Activated naive CD4-positive, alpha-beta T cell treated with anti-CD3 and anti-CD28 coated beads for 36 hours (primary cell): ENCODE measurements at regions of chr11 and their contacts with region 1.

Region 1: DNA sequence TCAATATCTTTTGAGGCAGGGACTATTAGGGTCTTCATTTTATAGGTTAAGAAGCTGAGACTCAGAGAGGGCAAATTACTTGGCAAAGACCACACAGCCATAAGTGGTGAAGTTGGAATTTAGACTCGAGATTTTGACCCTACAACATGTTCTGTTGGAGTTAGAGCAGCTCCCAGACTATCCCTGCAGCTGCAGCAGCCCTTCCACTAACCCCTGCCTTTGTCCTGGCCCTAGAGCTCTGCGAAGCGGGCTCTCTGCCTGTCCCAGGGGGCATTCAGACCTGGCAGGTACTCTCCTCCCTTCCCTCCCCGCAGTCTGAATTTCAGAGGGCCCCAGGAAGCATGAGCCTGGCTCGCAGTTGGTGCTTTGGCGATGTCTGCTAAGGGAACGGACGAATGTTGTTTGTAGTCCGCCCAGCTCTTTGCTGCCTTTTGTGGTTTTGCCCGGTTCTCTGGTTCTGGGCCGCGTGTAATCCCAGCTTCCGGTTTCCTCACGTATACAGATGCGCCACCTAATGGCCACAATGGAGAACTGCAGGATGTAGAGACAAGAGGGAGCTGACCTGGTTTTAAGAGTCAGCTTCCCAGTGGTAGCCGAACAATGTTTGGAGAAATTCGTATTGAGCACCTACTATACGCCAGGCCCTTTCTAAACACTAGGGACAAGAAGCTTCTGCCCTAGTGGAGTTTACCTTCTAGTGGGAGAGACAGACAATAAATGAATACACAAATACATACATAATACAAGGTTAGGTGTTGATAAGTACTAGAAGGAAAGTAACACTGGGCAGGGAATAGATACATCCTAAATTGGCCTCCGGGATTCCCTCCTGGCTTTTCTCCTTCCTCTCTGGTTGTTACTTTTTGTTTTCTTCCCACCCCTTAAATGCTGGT is 125.2 kb downstream of the ST3GAL4 start:
- DNase-seq: peak; percentile 83
- H3K4me3 Mint-ChIP-seq: peak overlapping the region; percentile 51
- H3K27ac Mint-ChIP-seq: no peak overlapping the region
- H3K4me1 Mint-ChIP-seq: peaks cover 14% of the 10 kb centered on the region
- H3K27me3 Mint-ChIP-seq: no peaks in the 10 kb centered on the region

Region 2: GRCh38 chr11:125923012-125923579 is 557.6 kb before region 1 on chr11:
- CTCF ChIA-PET with region 1: interaction called, 3 read pairs
- intact Hi-C with region 1: loop called (anchors 1 kb)
- DNase-seq: peak; percentile 75
- H3K4me3 Mint-ChIP-seq: no peak overlapping the region
- H3K27ac Mint-ChIP-seq: no peak overlapping the region
- H3K4me1 Mint-ChIP-seq: no peaks in the 10 kb centered on the region
- H3K27me3 Mint-ChIP-seq: peaks cover 9% of the 10 kb centered on the region

Region 3: GRCh38 chr11:126310228-126310991 is 170.2 kb before region 1 on chr11:
- CTCF ChIA-PET with region 1: interaction called, 98 read pairs
- intact Hi-C with region 1: loop called (anchors 1 kb)
- DNase-seq: peak; percentile 70
- H3K4me3 Mint-ChIP-seq: no peak overlapping the region
- H3K27ac Mint-ChIP-seq: no peak overlapping the region
- H3K4me1 Mint-ChIP-seq: peaks cover 17% of the 10 kb centered on the region
- H3K27me3 Mint-ChIP-seq: no peaks in the 10 kb centered on the region

Region 4: GRCh38 chr11:126318574-126319373 is 161.9 kb before region 1 on chr11:
- CTCF ChIA-PET with region 1: interaction called, 98 read pairs
- intact Hi-C with region 1: no loop called
- DNase-seq: peak; percentile 53
- H3K4me3 Mint-ChIP-seq: peak overlapping the region; percentile 44
- H3K27ac Mint-ChIP-seq: peak overlapping the region; percentile 43
- H3K4me1 Mint-ChIP-seq: peaks cover 32% of the 10 kb centered on the region
- H3K27me3 Mint-ChIP-seq: no peaks in the 10 kb centered on the region

Region 5: GRCh38 chr11:126416542-126417090 is 64.0 kb before region 1 on chr11:
- CTCF ChIA-PET with region 1: interaction called, 4 read pairs
- intact Hi-C with region 1: loop called (anchors 1 kb)
- DNase-seq: peak; percentile 83
- H3K4me3 Mint-ChIP-seq: peak overlapping the region; percentile 56
- H3K27ac Mint-ChIP-seq: no peak overlapping the region
- H3K4me1 Mint-ChIP-seq: peaks cover 14% of the 10 kb centered on the region
- H3K27me3 Mint-ChIP-seq: no peaks in the 10 kb centered on the region

Region 6: GRCh38 chr11:126440792-126441514 is 39.7 kb before region 1 on chr11:
- CTCF ChIA-PET with region 1: interaction called, 112 read pairs
- intact Hi-C with region 1: loop called (anchors 1 kb)
- DNase-seq: peak; percentile 84
- H3K4me3 Mint-ChIP-seq: no peak overlapping the region
- H3K27ac Mint-ChIP-seq: no peak overlapping the region
- H3K4me1 Mint-ChIP-seq: peaks cover 5% of the 10 kb centered on the region
- H3K27me3 Mint-ChIP-seq: peaks cover 6% of the 10 kb centered on the region

Region 7: GRCh38 chr11:126465573-126466188 is 15.0 kb before region 1 on chr11:
- CTCF ChIA-PET with region 1: interaction called, 49 read pairs
- intact Hi-C with region 1: loop called (anchors 1 kb)
- DNase-seq: peak; percentile 78
- H3K4me3 Mint-ChIP-seq: peak overlapping the region; percentile 16
- H3K27ac Mint-ChIP-seq: peak overlapping the region; percentile 43
- H3K4me1 Mint-ChIP-seq: peaks cover 18% of the 10 kb centered on the region
- H3K27me3 Mint-ChIP-seq: no peaks in the 10 kb centered on the region

Region 8: DNA sequence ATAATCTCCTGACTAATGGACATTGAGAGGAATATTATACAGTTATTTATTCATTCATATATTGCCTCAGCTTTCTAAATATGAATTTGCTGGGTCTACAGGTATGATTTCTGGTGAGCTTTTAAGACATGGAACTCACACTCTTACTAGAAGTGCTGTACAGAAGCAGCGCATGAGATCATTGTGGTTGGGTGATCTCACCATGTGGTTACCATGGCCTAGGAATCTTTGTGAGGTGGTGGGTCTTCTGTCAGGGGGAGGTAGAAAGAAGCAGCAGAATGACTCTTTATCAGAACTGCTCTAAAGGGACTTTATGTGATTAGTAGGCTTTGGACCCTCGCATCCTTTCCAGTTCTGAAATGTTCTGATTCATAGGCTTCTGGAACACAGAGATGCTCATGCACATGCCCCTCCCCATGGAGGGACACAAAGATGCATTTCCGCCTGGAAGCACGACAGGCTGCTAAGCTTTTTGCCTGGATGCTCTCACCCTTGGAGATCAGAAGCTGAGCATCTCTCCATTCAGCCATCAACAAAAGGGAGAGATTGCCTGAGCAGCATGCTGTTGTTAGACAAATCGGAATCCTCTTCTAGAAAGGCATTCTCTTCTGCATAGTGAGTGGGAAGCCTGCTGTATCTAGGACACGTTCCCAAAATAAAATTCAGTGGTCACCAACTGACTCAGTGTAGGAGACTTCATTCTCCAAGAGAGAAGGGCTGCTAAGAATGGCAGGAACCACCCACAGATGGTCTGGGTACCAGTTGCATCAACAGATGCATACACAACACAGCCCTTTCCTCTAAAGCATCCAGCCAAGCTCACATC is 468.6 kb after region 1 on chr11:
- CTCF ChIA-PET with region 1: no interaction called
- intact Hi-C with region 1: no loop called
- DNase-seq: peak; percentile 7
- H3K4me3 Mint-ChIP-seq: no peak overlapping the region
- H3K27ac Mint-ChIP-seq: no peak overlapping the region
- H3K4me1 Mint-ChIP-seq: no peaks in the 10 kb centered on the region
- H3K27me3 Mint-ChIP-seq: peaks cover 3% of the 10 kb centered on the region